ENCODE measurements at regions of chr4 and their contacts with region 1.

Region 1: DNA sequence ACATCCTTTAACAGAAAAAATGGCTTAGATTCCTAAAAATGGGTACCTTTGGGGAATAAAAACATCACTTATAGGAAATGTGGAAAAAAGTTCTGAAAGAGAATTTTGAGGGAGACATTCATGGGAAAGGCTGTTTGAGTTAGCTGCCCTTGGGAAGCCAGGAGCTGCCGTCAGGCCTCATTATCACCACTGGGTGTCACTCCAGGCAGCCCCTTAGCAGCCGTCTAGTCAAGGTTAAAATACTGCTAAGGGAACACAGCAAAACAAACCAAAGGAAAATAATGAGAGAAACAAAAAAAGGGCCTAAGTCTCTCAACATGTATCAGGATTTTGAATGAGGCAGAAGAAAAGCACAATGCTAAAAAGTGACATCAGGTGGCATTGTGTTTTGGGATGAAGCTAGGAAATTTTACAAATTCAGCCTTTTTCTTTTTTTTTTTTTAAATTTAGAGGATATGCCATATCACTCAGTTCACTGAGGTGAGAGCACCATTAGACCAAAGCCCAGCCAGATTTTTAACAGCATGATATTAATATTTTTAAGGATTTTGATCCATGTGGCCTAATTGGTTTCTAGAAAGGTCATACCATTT is 235.3 kb downstream of the GPAT3 start:
- DNase-seq: peak; percentile 10 to 24
- ATAC-seq: peak in 4 of 8 donors; percentile 43 to 83 (median 58)
- H3K4me3 ChIP-seq: no peak overlapping the region
- H3K27ac ChIP-seq: no peak overlapping the region
- H3K4me1 ChIP-seq: no peaks in the 10 kb centered on the region
- H3K27me3 ChIP-seq: peaks cover 0 to 25% (median 6%) of the 10 kb centered on the region in 7 donors
- CTCF ChIP-seq: peak; percentile 20 to 67 (median 61)

Region 2: GRCh38 chr4:83574247-83574646 is 197.0 kb before region 1 on chr4:
- intact Hi-C with region 1: no loop called
- DNase-seq: no peak
- ATAC-seq: peak in 7 of 8 donors; percentile 48 to 92 (median 87)
- H3K4me3 ChIP-seq: no peak overlapping the region
- H3K27ac ChIP-seq: peak overlapping the region in 7 of 10 donors; percentile 26 to 65 (median 53)
- H3K4me1 ChIP-seq: peaks cover 0 to 32% (median 9%) of the 10 kb centered on the region in 9 donors
- H3K27me3 ChIP-seq: no peaks in the 10 kb centered on the region
- CTCF ChIP-seq: no peak

Region 3: DNA sequence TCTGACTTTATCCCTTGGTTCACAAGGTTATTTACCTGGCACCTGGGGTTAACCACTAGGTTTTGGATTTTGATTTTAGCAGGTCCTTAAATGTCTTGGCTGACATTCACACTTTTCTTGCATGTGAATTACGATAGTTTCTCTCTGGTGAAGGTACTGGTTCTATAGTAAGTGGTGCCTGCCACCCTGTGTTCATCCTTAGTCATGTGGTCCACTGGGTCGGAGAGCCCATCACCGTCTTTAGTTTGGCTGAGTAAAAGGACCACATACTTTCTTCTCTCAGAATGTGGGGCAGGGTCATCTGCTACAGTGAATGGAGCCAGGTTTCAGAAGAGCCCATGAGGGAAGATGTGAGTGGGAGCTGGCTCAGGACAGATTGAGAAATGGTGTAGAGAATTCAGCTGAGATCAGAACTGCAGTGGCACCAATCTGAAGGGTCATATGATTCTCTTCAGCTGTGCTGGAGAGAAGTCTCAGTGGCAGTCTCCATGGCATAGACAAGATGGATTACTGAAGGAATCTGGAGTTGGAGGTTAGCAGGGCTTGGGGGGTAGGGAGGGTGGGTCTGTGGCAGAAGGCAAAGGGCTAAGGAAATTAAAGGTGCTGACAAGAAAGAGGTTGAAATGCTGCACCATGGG is 75.1 kb after region 1 on chr4:
- intact Hi-C with region 1: loop called in 5 of 10 experiments (anchors 2 to 10 kb)
- DNase-seq: no peak
- ATAC-seq: peak in 1 of 8 donors; percentile 86
- H3K4me3 ChIP-seq: no peak overlapping the region
- H3K27ac ChIP-seq: no peak overlapping the region
- H3K4me1 ChIP-seq: no peaks in the 10 kb centered on the region
- H3K27me3 ChIP-seq: peaks cover 0 to 9% (median 0%) of the 10 kb centered on the region in 7 donors
- CTCF ChIP-seq: no peak

Region 4: GRCh38 chr4:83961575-83961974 is 190.4 kb after region 1 on chr4:
- intact Hi-C with region 1: loop called in 3 of 10 experiments (anchors 5 to 10 kb)
- DNase-seq: no peak
- ATAC-seq: no peak
- H3K4me3 ChIP-seq: no peak overlapping the region
- H3K27ac ChIP-seq: no peak overlapping the region
- H3K4me1 ChIP-seq: no peaks in the 10 kb centered on the region
- H3K27me3 ChIP-seq: no peaks in the 10 kb centered on the region
- CTCF ChIP-seq: peak in 2 of 9 donors; percentile 12 to 20

Region 5: GRCh38 chr4:84503495-84504437 is 732.6 kb after region 1 on chr4:
- intact Hi-C with region 1: loop called in 4 of 10 experiments (anchors 10 kb)
- DNase-seq: peak in 1 of 2 donors; percentile 23
- ATAC-seq: peak in 6 of 8 donors; percentile 58 to 80 (median 70)
- H3K4me3 ChIP-seq: no peak overlapping the region
- H3K27ac ChIP-seq: no peak overlapping the region
- H3K4me1 ChIP-seq: peaks cover under 1 to 16% (median 12%) of the 10 kb centered on the region in 9 donors
- H3K27me3 ChIP-seq: peaks cover 31 to 100% (median 100%) of the 10 kb centered on the region in 7 donors
- CTCF ChIP-seq: peak in 8 of 9 donors; percentile 15 to 71 (median 60)

Region 6: DNA sequence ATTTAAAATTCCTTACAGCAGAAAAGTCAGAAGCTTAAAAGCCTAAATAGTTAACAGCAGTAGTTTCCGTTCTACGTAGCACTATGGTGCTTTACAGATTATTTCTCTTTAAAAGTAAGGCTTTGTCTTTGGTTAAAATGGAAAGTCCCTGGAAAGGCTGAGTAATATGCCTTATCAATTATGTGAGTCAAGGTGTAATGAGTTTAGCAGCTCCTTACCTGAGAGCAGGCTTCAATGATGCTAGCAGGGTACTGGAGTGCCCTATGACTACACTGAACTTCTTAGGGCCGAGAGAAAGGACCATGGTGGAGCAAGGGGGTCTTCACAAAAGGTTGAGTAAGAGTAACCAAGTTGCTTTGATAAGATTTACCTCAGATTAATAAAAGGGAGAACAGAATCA is 740.5 kb after region 1 on chr4:
- intact Hi-C with region 1: loop called in 5 of 10 experiments (anchors 10 kb)
- DNase-seq: no peak
- ATAC-seq: no peak
- H3K4me3 ChIP-seq: no peak overlapping the region
- H3K27ac ChIP-seq: no peak overlapping the region
- H3K4me1 ChIP-seq: no peaks in the 10 kb centered on the region
- H3K27me3 ChIP-seq: peaks cover 0 to 86% (median 59%) of the 10 kb centered on the region in 7 donors
- CTCF ChIP-seq: no peak

Measured in heart right ventricle (tissue), 16 donors.